ENCODE measurements at regions of chr10 and their contacts with region 1.

Region 1: GRCh38 chr10:31318854-31319601 is at the start of gene ZEB1:
- DNase-seq: peak; percentile 72 to 94
- H3K4me3 ChIP-seq: peak within 1 kb of the TSS; percentile 96 to 98
- H3K27ac ChIP-seq: peak within 1 kb of the TSS; percentile 95 to 98
- H3K4me1 ChIP-seq: peaks cover 0 to 9% of the 10 kb centered on the region in 2 donors
- H3K27me3 ChIP-seq: no peaks in the 10 kb centered on the region
- CTCF ChIP-seq: peak; percentile 47 to 73 (median 57)
- total RNA-seq, gene ZEB1: 77.3 TPM

Region 2: GRCh38 chr10:30783939-30784500 is 535.0 kb before region 1 on chr10:
- intact Hi-C with region 1: loop called (anchors 1 kb)
- DNase-seq: peak; percentile 37 to 92
- H3K4me3 ChIP-seq: peak overlapping the region; percentile 83 to 95
- H3K27ac ChIP-seq: peak overlapping the region; percentile 98
- H3K4me1 ChIP-seq: peaks cover 6 to 13% of the 10 kb centered on the region in 2 donors
- H3K27me3 ChIP-seq: no peaks in the 10 kb centered on the region
- CTCF ChIP-seq: peak; percentile 89 to 91 (median 90)

Region 3: GRCh38 chr10:31133628-31134302 is 185.3 kb before region 1 on chr10:
- intact Hi-C with region 1: loop called (anchors 2 kb)
- DNase-seq: peak; percentile 26 to 89
- H3K4me3 ChIP-seq: peak overlapping the region; percentile 61 to 74
- H3K27ac ChIP-seq: peak overlapping the region; percentile 95 to 96
- H3K4me1 ChIP-seq: peaks cover 3 to 22% of the 10 kb centered on the region in 2 donors
- H3K27me3 ChIP-seq: no peaks in the 10 kb centered on the region
- CTCF ChIP-seq: no peak

Region 4: GRCh38 chr10:31404640-31405039 is 85.6 kb after region 1 on chr10:
- intact Hi-C with region 1: no loop called
- DNase-seq: no peak
- H3K4me3 ChIP-seq: no peak overlapping the region
- H3K27ac ChIP-seq: no peak overlapping the region
- H3K4me1 ChIP-seq: peaks cover 3 to 11% of the 10 kb centered on the region in 2 donors
- H3K27me3 ChIP-seq: no peaks in the 10 kb centered on the region
- CTCF ChIP-seq: no peak

Region 5: GRCh38 chr10:31508882-31509281 is 189.9 kb after region 1 on chr10:
- intact Hi-C with region 1: no loop called
- DNase-seq: no peak
- H3K4me3 ChIP-seq: no peak overlapping the region
- H3K27ac ChIP-seq: no peak overlapping the region
- H3K4me1 ChIP-seq: no peaks in the 10 kb centered on the region
- H3K27me3 ChIP-seq: no peaks in the 10 kb centered on the region
- CTCF ChIP-seq: no peak

Region 6: DNA sequence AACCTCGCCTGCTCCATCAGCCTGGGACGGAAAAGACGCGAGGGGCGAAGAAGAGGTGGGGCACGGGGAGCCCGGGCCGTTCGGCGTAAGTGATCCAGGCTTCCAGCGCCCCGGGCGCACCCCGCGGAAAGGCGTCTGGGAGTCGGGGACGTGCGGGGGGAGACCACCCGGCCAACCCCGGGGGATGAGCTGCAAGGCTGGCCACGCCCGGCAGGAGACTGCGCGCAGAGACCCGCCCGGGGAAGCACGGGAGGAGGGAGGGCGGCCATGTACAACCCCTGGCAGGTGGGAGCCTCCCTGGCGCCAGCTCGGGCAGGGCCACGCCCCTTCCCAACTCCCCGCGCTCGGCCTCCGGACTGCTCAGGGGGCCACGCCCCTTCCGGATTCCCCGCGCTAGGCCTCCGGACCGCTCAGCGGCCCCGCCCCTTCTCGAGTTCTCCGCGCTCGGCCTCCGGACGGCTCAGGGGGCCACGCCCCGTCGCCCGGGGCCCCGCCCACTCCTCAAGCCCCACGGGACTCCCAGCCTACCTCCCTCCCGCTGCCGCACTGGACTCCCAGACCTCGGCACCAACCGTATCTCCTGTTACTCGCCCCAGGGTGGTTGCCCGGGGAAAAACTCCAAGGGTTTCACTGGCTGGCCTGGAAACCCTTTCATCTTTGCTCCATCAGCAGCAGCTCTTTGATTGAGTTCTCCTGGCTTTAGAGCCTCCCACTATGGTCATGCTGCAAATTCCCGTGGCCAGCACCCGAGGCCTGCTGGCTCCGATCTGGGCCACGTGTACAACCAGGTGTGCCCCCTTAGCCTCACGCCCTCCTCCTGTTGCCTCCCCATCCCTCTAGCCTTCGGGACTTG is 284.4 kb after region 1 on chr10:
- intact Hi-C with region 1: loop called (anchors 2 kb)
- DNase-seq: peak; percentile 85 to 97
- H3K4me3 ChIP-seq: peak overlapping the region; percentile 65 to 80
- H3K27ac ChIP-seq: peak overlapping the region; percentile 87 to 89
- H3K4me1 ChIP-seq: no peaks in the 10 kb centered on the region
- H3K27me3 ChIP-seq: no peaks in the 10 kb centered on the region
- CTCF ChIP-seq: peak in 1 of 3 experiments; percentile 6

Region 7: GRCh38 chr10:31759799-31760626 is 441.0 kb after region 1 on chr10:
- intact Hi-C with region 1: loop called (anchors 5 kb)
- DNase-seq: peak; percentile 95 to 98
- H3K4me3 ChIP-seq: peak overlapping the region; percentile 81 to 84
- H3K27ac ChIP-seq: peak overlapping the region; percentile 92 to 98
- H3K4me1 ChIP-seq: peaks cover 9 to 18% of the 10 kb centered on the region in 2 donors
- H3K27me3 ChIP-seq: no peaks in the 10 kb centered on the region
- CTCF ChIP-seq: no peak